ENCODE measurements at regions of chr5 and their contacts with region 1.

Region 1: GRCh38 chr5:109857405-109858031 is 167.8 kb downstream of the MAN2A1 start:
- DNase-seq: peak; percentile 27
- H3K4me3 Mint-ChIP-seq: no peak overlapping the region
- H3K27ac Mint-ChIP-seq: peak overlapping the region; percentile 79
- H3K4me1 Mint-ChIP-seq: peaks cover 55% of the 10 kb centered on the region
- H3K27me3 Mint-ChIP-seq: no peaks in the 10 kb centered on the region

Region 2: DNA sequence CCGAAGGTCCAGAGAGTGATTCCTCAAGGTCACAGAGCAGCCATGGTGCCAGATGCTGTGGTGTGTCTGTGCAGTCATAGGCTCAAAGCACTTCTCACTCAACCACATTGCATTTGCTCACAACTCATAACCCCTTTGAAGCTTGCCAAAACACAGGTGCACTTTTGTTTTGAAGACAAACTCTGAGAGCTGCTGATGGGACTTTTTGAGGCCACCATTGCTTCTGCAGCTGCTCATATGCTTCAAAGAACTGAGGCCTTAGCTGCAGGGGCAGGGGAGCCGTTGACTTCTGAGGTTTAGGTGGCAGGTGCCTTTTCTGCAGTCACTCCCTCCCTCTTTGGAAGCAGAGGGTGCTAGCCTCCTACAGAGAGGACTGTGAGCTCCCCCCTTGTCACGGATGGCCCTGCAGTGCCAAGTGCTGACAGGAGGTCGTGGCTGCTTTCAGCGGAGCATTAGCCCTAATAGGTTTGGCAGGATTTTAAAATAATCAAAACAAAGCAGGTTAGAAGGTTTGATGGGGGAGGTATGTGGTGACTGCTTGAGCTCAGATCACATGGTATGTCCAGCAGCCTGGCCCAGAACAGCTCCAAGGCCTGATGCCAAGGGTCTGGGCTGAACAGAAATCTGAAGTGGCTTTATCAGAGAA is 64.3 kb after region 1 on chr5:
- CTCF ChIA-PET with region 1: no interaction called
- POLR2A ChIA-PET with region 1: no interaction called
- intact Hi-C with region 1: loop called (anchors 5 kb)
- DNase-seq: peak; percentile 63
- H3K4me3 Mint-ChIP-seq: peak overlapping the region; percentile 37
- H3K27ac Mint-ChIP-seq: peak overlapping the region; percentile 86
- H3K4me1 Mint-ChIP-seq: peaks cover 32% of the 10 kb centered on the region
- H3K27me3 Mint-ChIP-seq: no peaks in the 10 kb centered on the region

Region 3: DNA sequence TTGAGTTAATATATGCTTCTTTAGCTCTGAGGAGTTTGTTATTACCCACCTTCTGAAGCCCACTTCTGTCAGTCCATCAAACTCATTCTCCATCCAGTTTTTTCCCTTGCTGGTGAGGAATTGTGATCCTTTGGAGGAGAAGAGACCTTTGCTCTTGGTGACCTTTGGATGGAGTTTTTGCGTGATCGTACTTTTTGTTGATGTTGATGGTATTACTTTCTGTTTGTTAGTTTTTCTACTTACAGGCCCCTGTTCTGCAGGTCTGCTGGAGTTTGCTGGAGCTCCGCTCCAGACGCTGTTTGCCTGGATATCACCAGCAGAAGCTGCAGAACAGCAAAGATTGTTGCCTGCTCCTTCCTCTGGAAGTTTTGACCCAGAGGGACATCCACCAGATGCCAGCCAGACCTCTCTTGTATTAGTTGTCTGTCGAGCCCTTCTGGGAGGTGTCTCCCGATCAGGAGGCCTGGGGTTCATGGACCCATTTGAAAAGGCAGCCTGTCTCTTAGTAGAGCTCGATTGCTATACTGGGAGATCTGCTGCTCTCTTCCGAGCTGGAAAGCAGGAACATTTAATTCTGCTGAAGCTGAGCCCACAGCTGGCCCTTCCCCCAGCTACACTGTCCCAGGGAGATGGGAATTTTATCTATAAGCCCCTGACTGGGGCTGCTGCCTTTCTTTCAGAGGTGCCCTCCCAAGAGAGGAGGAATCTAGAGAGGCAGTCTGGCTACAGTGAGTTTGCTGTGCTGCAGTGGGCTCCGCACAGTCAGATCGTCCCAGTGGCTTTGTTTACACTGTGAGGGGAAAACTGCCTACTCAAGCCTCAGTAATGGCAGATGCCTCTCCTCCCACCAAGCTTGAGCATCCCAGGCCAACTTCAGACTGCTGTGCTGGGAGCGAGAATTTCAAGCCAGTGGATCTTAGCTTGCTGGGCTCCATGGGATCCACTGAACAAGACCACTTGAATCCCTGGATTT is 277.7 kb after region 1 on chr5:
- CTCF ChIA-PET with region 1: no interaction called
- POLR2A ChIA-PET with region 1: no interaction called
- intact Hi-C with region 1: no loop called
- DNase-seq: no peak
- H3K4me3 Mint-ChIP-seq: no peak overlapping the region
- H3K27ac Mint-ChIP-seq: no peak overlapping the region
- H3K4me1 Mint-ChIP-seq: no peaks in the 10 kb centered on the region
- H3K27me3 Mint-ChIP-seq: peaks cover 4% of the 10 kb centered on the region